Activated CD4-positive, alpha-beta memory T cell treated with anti-CD3 and anti-CD28 coated beads for 36 hours (primary cell): ENCODE measurements at regions of chr3 and their contacts with region 1.

Region 1: GRCh38 chr3:17841190-17841828 is 98.9 kb upstream of the TBC1D5 start:
- DNase-seq: peak; percentile 82
- H3K4me3 Mint-ChIP-seq: no peak overlapping the region
- H3K27ac Mint-ChIP-seq: no peak overlapping the region
- H3K4me1 Mint-ChIP-seq: no peaks in the 10 kb centered on the region
- H3K27me3 Mint-ChIP-seq: peaks cover 4% of the 10 kb centered on the region

Region 2: GRCh38 chr3:17258823-17259436 is 582.4 kb before region 1 on chr3:
- CTCF ChIA-PET with region 1: interaction called, 10 read pairs
- POLR2A ChIA-PET with region 1: no interaction called
- intact Hi-C with region 1: loop called (anchors 1 kb)
- DNase-seq: no peak
- H3K4me3 Mint-ChIP-seq: no peak overlapping the region
- H3K27ac Mint-ChIP-seq: no peak overlapping the region
- H3K4me1 Mint-ChIP-seq: no peaks in the 10 kb centered on the region
- H3K27me3 Mint-ChIP-seq: no peaks in the 10 kb centered on the region

Region 3: GRCh38 chr3:17423786-17424536 is 417.3 kb before region 1 on chr3:
- CTCF ChIA-PET with region 1: interaction called, 25 read pairs
- POLR2A ChIA-PET with region 1: no interaction called
- intact Hi-C with region 1: no loop called
- DNase-seq: no peak
- H3K4me3 Mint-ChIP-seq: no peak overlapping the region
- H3K27ac Mint-ChIP-seq: no peak overlapping the region
- H3K4me1 Mint-ChIP-seq: no peaks in the 10 kb centered on the region
- H3K27me3 Mint-ChIP-seq: no peaks in the 10 kb centered on the region

Region 4: GRCh38 chr3:17585394-17586325 is 255.6 kb before region 1 on chr3:
- CTCF ChIA-PET with region 1: no interaction called
- POLR2A ChIA-PET with region 1: no interaction called
- intact Hi-C with region 1: no loop called
- DNase-seq: no peak
- H3K4me3 Mint-ChIP-seq: no peak overlapping the region
- H3K27ac Mint-ChIP-seq: no peak overlapping the region
- H3K4me1 Mint-ChIP-seq: peaks cover 3% of the 10 kb centered on the region
- H3K27me3 Mint-ChIP-seq: no peaks in the 10 kb centered on the region

Region 5: GRCh38 chr3:17645072-17645698 is 196.1 kb before region 1 on chr3:
- CTCF ChIA-PET with region 1: interaction called, 57 read pairs
- POLR2A ChIA-PET with region 1: no interaction called
- intact Hi-C with region 1: loop called (anchors 2 kb)
- DNase-seq: no peak
- H3K4me3 Mint-ChIP-seq: no peak overlapping the region
- H3K27ac Mint-ChIP-seq: no peak overlapping the region
- H3K4me1 Mint-ChIP-seq: peaks cover 10% of the 10 kb centered on the region
- H3K27me3 Mint-ChIP-seq: no peaks in the 10 kb centered on the region